Ascending aorta (tissue), 2 donors: ENCODE measurements at regions of chr11 and their contacts with region 1.

Region 1: GRCh38 chr11:94128746-94129511 is at the start of gene PANX1:
- DNase-seq: peak in 1 of 2 donors; percentile 89
- H3K4me3 ChIP-seq: peak within 1 kb of the TSS; percentile 66 to 94
- H3K27ac ChIP-seq: peak within 1 kb of the TSS; percentile 90 to 96
- H3K4me1 ChIP-seq: peaks cover 2 to 34% of the 10 kb centered on the region in 2 donors
- H3K27me3 ChIP-seq: no peaks in the 10 kb centered on the region
- CTCF ChIP-seq: no peak
- total RNA-seq, gene PANX1: 24.4 TPM

Region 2: DNA sequence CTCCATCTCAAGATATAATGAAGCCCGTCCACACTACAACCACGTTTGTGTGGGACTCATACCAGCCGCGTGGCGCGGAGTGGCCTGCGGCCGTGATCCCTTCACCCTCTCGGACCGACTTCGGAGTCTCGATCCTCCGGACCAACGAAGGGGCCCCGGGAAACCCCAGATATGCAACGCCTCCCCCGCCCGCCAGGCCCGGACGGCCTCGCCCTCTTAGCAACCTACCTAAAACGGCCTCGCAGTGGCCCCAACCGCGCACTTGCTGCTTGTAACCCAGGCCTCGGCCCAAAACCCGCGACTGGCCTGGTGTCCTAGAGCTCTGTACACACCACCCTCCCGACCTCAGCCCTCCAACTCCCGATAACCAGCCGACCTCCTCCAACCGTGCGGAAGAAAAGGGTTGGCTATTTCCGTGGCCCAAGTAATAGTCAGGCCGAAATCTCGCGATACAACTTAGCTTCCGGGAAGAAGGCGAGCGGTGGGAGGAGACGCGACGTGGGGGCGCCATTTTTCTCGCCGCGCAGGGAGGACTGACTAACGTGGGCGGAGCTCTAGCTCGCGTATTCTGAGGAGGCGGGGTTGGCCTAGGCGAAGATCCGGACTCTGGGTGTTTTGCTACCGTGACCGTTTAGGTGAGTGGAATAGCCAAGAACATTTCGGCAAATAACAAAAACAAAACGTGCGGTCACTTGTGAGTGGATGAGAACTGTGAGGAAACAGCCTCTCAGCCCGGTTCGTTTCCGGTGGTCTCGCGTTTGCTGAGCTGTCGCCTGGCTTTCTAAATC is 387.6 kb before region 1 on chr11 and contains the starts of genes C11orf54 and TAF1D:
- intact Hi-C with region 1: loop called (anchors 5 kb)
- DNase-seq: peak; percentile 91 to 99
- H3K4me3 ChIP-seq: peak within 1 kb of the TSS; percentile 88 to 91
- H3K27ac ChIP-seq: peak within 1 kb of the TSS; percentile 93 to 94
- H3K4me1 ChIP-seq: peaks cover 19 to 45% of the 10 kb centered on the region in 2 donors
- H3K27me3 ChIP-seq: no peaks in the 10 kb centered on the region
- CTCF ChIP-seq: peak in 1 of 3 experiments; percentile 6
- total RNA-seq, gene C11orf54: 3.9 TPM
- total RNA-seq, gene TAF1D: 81.1 TPM

Region 3: DNA sequence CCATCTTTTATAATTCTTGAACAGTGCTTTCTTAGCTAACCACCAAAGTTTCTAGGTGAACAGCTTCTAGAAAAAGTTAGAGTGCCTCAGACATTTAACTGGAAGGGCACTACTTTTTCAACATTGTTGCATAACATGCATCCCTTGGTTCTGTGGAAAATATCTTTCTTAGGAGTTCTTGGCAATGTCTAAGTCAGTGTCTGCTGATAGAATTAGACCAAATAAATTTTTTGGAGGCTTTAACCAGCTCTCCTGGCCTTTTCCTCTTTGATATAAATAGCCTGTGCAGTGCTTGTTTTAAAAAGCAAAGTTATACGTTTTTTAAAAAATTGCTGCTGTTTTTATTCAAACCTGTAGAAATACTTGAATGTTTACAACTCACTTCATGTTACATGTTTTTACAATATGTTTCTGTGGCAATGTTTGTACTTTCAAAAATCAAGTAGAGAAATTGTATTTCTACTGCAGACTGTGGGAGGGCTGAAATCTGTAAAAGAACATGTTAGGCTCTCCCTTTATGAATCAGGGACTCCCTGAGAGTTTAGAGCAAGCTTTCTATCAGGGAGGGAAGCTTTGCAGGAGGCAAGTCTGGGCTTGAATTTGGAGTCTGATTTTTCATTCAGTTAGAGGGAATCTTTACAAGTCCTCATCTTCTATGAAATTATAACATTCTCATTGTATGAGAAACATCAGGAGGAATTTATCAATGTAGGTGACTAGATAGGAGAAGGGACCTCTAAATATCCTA is 16.5 kb before region 1 on chr11:
- intact Hi-C with region 1: loop called (anchors 2 kb)
- DNase-seq: no peak
- H3K4me3 ChIP-seq: no peak overlapping the region
- H3K27ac ChIP-seq: peak overlapping the region; percentile 39 to 64
- H3K4me1 ChIP-seq: peaks cover 5 to 21% of the 10 kb centered on the region in 2 donors
- H3K27me3 ChIP-seq: no peaks in the 10 kb centered on the region
- CTCF ChIP-seq: no peak

Region 4: DNA sequence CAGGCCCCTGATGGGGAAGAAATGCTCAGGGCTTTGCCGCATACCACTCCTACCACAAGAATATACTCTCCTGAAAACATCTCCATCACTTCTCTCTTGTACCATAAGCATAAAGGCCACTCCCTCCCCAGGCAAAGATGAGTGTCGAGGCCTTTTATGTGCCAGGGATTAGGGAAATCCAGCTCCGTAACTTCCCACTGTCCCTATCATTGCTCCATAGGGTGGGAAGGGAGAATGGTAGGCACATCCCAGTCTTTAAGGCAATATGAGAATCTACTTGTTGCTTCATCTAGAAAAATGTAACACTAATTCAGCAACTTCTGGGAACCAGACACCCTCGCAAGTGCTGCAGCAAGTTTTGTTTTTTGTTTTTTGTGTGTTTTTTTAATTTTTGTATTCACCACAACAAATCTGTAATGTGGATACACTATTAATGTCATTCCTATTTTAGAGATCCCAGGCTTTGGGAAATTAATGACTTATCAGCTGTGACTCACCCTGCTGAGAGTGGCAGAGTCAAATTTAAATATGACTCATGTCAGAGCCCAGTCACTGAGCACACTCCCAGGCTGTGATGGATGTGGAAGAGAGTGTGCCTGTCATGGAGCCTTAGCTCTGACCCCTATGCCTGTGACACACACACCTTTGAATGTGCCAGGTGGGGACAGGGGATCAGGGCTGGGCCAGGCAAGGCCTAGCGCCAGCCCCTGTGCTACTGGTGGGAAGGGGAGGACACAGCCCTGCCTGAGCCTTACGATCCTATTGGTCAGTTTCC is 23.2 kb after region 1 on chr11:
- intact Hi-C with region 1: loop called (anchors 2 kb)
- DNase-seq: peak; percentile 28 to 80
- H3K4me3 ChIP-seq: no peak overlapping the region
- H3K27ac ChIP-seq: peak overlapping the region; percentile 70 to 84
- H3K4me1 ChIP-seq: peaks cover 22 to 46% of the 10 kb centered on the region in 2 donors
- H3K27me3 ChIP-seq: no peaks in the 10 kb centered on the region
- CTCF ChIP-seq: no peak

Region 5: GRCh38 chr11:94183886-94184264 is 54.9 kb after region 1 on chr11:
- intact Hi-C with region 1: loop called (anchors 1 kb)
- DNase-seq: peak in 1 of 2 donors; percentile 72
- H3K4me3 ChIP-seq: peak overlapping the region in 1 of 2 donors; percentile 39
- H3K27ac ChIP-seq: peak overlapping the region; percentile 2 to 38
- H3K4me1 ChIP-seq: peaks cover 0 to 12% of the 10 kb centered on the region in 2 donors
- H3K27me3 ChIP-seq: no peaks in the 10 kb centered on the region
- CTCF ChIP-seq: peak; percentile 64 to 88 (median 87)